Caco-2 (cell line): ENCODE measurements at regions of chr12 and their contacts with region 1.

Region 1: GRCh38 chr12:93979189-93979588 is 169.2 kb upstream of the PLXNC1 start:
- DNase-seq: peak in 1 of 2 experiments; percentile 6
- H3K4me3 ChIP-seq: no peak overlapping the region
- H3K4me3 Mint-ChIP-seq: no peak overlapping the region
- H3K27ac Mint-ChIP-seq: no peak overlapping the region
- H3K4me1 ChIP-seq: no peaks in the 10 kb centered on the region
- H3K4me1 Mint-ChIP-seq: peaks cover 9% of the 10 kb centered on the region
- H3K27me3 ChIP-seq: no peaks in the 10 kb centered on the region
- H3K27me3 Mint-ChIP-seq: no peaks in the 10 kb centered on the region
- CTCF ChIP-seq: peak; percentile 20 to 21

Region 2: DNA sequence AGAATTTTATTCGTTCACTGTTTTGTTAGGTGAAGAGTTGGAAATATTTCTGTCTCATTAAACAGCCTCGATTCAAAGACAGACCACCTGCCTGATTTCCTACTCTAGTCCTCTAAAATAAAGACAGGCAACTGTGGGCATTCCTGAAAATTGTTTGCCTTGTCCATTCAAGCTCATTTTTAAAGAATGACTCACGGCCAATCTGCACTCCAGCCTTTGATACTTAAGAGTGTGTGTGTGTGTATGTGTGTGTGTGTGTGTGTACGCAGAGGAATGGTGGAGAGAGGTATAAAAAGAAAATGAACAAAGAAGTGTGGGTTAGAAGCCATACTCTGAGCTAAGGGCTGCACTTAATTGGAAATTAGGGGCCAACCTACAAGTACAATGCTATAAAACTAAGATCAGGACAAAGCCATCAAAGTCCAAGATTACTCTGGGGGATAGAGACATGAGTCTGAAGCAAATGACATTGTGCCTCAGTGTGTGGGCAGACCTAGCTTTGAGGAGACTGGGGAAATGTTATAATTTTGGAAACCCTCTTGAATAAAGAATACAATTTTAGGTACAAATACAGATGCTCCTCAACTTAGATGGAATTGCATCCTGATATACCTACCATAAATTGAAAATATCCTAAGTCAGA is 452.3 kb before region 1 on chr12:
- CTCF ChIA-PET with region 1: no interaction called
- POLR2A ChIA-PET with region 1: no interaction called
- intact Hi-C with region 1: loop called (anchors 10 kb)
- DNase-seq: peak; percentile 84
- H3K4me3 ChIP-seq: no peak overlapping the region
- H3K4me3 Mint-ChIP-seq: peak overlapping the region; percentile 35
- H3K27ac Mint-ChIP-seq: peak overlapping the region; percentile 64
- H3K4me1 ChIP-seq: peaks cover 36% of the 10 kb centered on the region
- H3K4me1 Mint-ChIP-seq: peaks cover 34% of the 10 kb centered on the region
- H3K27me3 ChIP-seq: no peaks in the 10 kb centered on the region
- H3K27me3 Mint-ChIP-seq: no peaks in the 10 kb centered on the region
- CTCF ChIP-seq: no peak

Region 3: GRCh38 chr12:93766796-93767523 is 212.2 kb before region 1 on chr12:
- CTCF ChIA-PET with region 1: no interaction called
- POLR2A ChIA-PET with region 1: no interaction called
- intact Hi-C with region 1: loop called (anchors 1 kb)
- DNase-seq: no peak
- H3K4me3 ChIP-seq: no peak overlapping the region
- H3K4me3 Mint-ChIP-seq: no peak overlapping the region
- H3K27ac Mint-ChIP-seq: no peak overlapping the region
- H3K4me1 ChIP-seq: peaks cover 8% of the 10 kb centered on the region
- H3K4me1 Mint-ChIP-seq: peaks cover 18% of the 10 kb centered on the region
- H3K27me3 ChIP-seq: no peaks in the 10 kb centered on the region
- H3K27me3 Mint-ChIP-seq: no peaks in the 10 kb centered on the region
- CTCF ChIP-seq: no peak

Region 4: DNA sequence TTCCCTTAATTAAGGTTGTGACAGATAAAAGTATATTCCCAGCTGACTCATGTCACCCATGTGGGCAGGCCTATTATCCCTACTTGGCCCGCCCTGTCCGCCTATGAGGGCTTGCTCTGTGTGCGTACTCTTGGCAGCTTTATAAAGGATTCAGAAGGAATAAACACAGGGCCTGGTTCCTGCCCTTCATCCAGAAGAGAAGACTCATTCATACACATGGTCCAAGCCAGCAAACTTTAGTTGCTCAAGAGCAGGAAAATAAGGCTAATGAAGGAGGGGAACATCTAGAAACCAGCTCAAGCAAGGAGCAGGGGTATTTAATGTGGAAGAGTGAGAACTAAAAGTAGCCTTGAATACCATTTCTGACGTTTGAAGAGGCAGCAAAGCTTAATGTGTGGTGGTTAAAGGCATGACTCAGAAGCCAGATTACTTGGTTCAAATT is 160.1 kb before region 1 on chr12:
- CTCF ChIA-PET with region 1: no interaction called
- POLR2A ChIA-PET with region 1: no interaction called
- intact Hi-C with region 1: no loop called
- DNase-seq: no peak
- H3K4me3 ChIP-seq: no peak overlapping the region
- H3K4me3 Mint-ChIP-seq: no peak overlapping the region
- H3K27ac Mint-ChIP-seq: no peak overlapping the region
- H3K4me1 ChIP-seq: 0 out of 2 replicates have a peak, but pooled peaks cover 3% of the 10 kb centered on the region
- H3K4me1 Mint-ChIP-seq: no peaks in the 10 kb centered on the region
- H3K27me3 ChIP-seq: no peaks in the 10 kb centered on the region
- H3K27me3 Mint-ChIP-seq: no peaks in the 10 kb centered on the region
- CTCF ChIP-seq: no peak